Thyroid gland (tissue), 4 donors: ENCODE measurements at regions of chr17 and their contacts with region 1.

Region 1: DNA sequence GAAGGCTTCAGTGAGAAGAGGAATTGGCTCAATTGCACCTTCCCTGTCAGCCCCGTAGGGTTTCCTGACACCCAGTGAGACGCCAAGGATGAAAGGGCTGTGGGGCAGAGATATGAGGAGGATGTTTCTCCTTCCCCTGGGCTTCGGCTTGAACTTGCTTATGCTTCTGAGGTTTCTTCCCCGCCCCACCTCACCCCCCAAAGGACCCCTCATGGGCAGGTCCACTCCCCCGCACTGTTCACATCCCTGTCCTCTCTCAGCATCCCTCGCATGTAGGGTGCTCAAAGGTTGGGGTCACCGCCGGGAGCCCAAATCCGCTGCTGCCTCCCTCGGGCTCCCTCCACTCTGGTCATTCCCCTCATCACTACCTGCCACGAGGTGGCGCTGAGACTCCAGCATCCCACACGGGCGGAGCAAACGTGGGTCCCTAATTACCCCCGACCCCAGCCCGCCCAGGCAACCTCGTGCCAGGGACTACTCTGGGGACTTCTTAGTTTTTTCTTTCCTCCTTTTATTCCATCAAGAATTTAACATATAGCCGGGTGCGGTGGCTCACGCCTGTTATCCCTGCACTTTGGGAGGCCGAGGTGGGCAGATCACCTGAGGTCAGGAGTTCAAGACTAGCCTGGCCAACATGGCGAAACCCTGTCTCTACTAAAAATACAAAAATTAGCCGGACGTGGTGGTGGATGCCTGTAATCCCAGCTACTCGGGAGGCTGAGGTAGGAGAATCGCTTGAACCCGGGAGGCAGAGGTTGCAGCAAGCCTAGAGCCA is 3.3 kb upstream of the TRARG1 start:
- DNase-seq: peak; percentile 57 to 68
- H3K4me3 ChIP-seq: no peak overlapping the region
- H3K27ac ChIP-seq: no peak overlapping the region
- H3K4me1 ChIP-seq: no peaks in the 10 kb centered on the region
- H3K27me3 ChIP-seq: no peaks in the 10 kb centered on the region
- CTCF ChIP-seq: peak; percentile 59 to 89 (median 69)
- POLR2A ChIP-seq: no peak

Region 2: GRCh38 chr17:1555651-1556471 is 279.7 kb after region 1 on chr17:
- intact Hi-C with region 1: loop called (anchors 10 kb)
- DNase-seq: peak; percentile 69 to 81
- H3K4me3 ChIP-seq: no peak overlapping the region
- H3K27ac ChIP-seq: peak overlapping the region in 2 of 3 donors; percentile 24 to 56
- H3K4me1 ChIP-seq: peaks cover 46 to 59% of the 10 kb centered on the region in 2 donors
- H3K27me3 ChIP-seq: no peaks in the 10 kb centered on the region
- CTCF ChIP-seq: no peak
- POLR2A ChIP-seq: no peak